GM10248 (cell line): ENCODE measurements at regions of chr17 and their contacts with region 1.

Region 1: GRCh38 chr17:2215616-2216364 is 87.8 kb downstream of the SMG6 start:
- DNase-seq: peak; percentile 83
- CTCF ChIP-seq: no peak

Region 2: DNA sequence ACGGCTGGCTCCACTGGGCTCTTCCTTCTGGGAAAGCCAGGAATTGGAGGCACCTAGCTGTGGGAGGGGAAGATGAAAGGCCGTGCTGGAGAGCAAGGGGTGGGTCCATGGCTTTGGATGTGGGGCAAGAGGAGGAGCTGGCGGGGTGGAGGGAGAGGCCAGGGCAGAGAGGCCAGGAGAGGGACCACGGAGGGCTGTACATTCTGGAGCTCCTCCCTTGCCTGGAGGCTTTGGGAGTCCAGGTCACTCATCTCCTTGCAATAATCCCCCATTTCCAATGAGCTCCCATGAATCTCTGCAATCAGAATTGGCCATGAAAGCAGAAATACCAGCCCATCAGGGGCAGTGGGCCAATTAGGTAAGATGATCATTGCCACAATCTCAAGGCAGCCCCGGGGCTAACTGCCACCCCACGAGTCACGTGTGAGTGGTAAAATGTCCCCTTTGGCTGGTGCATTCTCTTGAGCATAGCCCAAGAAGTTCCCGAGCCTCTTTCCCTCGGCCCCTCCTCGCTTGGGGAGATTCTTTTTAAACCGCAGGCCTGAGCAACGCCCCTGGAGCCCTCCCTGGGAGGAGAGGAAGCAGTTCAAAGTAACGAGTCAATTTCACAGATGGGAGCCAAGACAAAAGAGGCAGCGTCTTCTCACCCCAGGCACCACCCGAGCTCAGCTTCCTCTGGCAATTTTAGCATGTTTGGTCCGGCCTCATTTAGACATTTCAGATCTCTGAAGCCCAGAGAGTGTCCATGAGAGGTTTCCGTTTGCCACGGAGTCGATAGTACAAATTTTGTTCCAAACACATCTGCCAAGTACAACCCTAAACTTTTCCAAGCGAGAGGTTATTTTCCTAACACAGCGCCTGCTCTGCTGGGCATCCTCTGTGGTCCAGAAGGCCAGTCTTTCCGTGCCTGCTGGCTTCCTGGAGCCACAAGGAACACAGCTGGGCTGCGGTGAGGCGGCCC is 204.1 kb before region 1 on chr17:
- CTCF ChIA-PET with region 1: no interaction called
- POLR2A ChIA-PET with region 1: no interaction called
- DNase-seq: no peak
- CTCF ChIP-seq: no peak

Region 3: GRCh38 chr17:2202996-2203575 is 12.7 kb before region 1 on chr17:
- CTCF ChIA-PET with region 1: interaction called, 12 read pairs
- POLR2A ChIA-PET with region 1: interaction called, 3 read pairs
- DNase-seq: no peak
- CTCF ChIP-seq: no peak

Region 4: GRCh38 chr17:2401426-2402221 is 185.8 kb after region 1 on chr17:
- CTCF ChIA-PET with region 1: no interaction called
- POLR2A ChIA-PET with region 1: no interaction called
- DNase-seq: peak; percentile 93
- CTCF ChIP-seq: no peak